Activated CD4-positive, alpha-beta memory T cell treated with anti-CD3 and anti-CD28 coated beads, Interleukin-2, amount 10 ng/mL, durations not matched to agents 7 days and 5 days (primary cell): ENCODE measurements at regions of chr14 and their contacts with region 1.

Region 1: DNA sequence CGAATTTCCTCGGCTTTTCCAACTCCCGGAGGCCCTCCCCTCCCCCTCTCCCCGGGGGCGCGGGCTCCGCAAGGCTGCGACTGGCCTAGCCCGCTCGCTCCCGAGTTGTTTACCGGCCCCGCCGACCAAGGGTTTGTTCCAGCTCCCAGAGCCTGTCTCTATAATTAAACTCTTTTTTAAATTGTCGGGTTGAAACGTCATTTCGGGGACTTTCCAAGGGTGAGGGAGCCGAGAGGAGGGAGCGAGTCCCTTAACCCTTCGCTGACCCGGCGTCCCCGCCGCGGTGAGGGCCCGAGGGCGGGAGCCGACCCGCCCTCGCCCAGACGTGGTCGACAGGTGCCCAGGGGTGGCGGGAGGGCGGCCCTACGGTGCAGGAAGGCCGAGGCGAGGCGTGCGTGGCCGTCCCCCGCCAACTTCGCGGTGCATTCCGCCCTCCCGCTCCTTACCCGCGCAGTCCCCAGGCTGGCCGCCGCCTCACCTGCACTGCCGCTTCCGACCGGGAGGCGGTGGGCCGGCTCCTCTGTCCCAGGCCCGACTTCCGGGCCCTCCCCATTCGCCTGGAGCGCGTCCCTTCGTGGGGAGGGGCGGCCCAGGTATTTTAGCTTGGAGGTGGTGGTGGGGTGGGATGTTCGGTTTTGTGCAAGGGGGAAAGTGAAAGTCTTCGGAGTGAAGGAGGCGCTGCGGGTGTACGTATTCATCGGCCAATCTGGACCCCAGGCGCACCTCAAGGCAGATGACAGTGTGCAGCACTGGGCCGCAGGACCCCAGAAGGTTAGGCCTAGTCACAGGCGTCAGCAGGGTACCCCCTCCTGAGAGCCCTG is 2.9 kb upstream of the ZFP36L1 start:
- DNase-seq: peak; percentile 84
- H3K4me3 Mint-ChIP-seq: peak overlapping the region; percentile 92
- H3K27ac Mint-ChIP-seq: peak overlapping the region; percentile 100
- H3K4me1 Mint-ChIP-seq: peaks cover 34% of the 10 kb centered on the region
- H3K27me3 Mint-ChIP-seq: no peaks in the 10 kb centered on the region

Region 2: GRCh38 chr14:68283378-68284123 is 512.3 kb before region 1 on chr14:
- CTCF ChIA-PET with region 1: interaction called, 4 read pairs
- POLR2A ChIA-PET with region 1: interaction called, 35 read pairs
- DNase-seq: peak; percentile 79
- H3K4me3 Mint-ChIP-seq: peak overlapping the region; percentile 47
- H3K27ac Mint-ChIP-seq: peak overlapping the region; percentile 96
- H3K4me1 Mint-ChIP-seq: peaks cover 48% of the 10 kb centered on the region
- H3K27me3 Mint-ChIP-seq: no peaks in the 10 kb centered on the region

Region 3: DNA sequence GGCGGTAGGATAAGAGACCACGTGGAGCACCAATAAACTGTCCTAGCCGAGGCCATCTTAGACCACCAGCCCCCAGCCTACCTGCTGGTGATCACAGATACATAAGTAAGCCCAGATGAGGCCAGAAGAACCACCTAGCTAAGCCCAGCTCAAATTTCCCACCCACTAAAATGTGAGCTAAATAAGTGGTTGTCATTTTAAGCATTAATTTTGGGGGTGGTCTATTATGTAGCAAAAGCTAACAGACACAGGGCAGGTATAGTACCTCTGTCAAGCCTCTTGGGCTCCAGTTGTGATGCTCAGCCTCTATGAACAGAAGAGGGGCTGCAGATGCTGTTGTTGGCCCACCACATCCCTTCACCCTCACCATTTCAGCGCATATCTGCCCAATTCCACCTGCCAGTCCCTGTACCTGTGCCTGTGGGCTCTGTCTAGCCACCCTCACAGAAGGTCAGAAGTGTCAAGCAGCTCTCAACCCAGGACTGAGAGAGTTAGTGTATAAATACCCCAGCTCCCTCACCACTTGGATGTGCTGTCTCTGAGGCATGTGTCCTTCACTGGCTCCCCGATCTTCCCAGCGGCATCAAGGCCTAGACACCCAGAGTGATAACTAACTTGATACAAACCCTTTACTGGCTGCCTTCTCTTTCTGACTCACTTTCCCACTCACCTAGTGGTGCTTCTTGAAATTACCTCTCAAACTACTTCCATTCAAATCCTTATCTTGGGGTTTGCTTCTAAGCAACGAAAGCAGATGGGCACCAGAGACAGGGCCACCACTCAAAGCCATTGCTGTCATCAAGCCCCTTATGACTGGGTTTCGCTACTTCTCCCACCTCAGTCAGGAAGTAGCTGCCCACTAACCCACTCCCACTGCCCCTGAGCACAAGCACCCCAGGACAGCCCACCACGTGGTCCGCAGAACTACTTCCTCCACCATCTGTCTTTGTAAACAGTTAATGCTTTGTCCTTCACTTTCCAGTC is 20.4 kb before region 1 on chr14:
- CTCF ChIA-PET with region 1: interaction called, 43 read pairs
- POLR2A ChIA-PET with region 1: interaction called, 313 read pairs
- DNase-seq: no peak
- H3K4me3 Mint-ChIP-seq: no peak overlapping the region
- H3K27ac Mint-ChIP-seq: no peak overlapping the region
- H3K4me1 Mint-ChIP-seq: peaks cover 60% of the 10 kb centered on the region
- H3K27me3 Mint-ChIP-seq: no peaks in the 10 kb centered on the region

Region 4: DNA sequence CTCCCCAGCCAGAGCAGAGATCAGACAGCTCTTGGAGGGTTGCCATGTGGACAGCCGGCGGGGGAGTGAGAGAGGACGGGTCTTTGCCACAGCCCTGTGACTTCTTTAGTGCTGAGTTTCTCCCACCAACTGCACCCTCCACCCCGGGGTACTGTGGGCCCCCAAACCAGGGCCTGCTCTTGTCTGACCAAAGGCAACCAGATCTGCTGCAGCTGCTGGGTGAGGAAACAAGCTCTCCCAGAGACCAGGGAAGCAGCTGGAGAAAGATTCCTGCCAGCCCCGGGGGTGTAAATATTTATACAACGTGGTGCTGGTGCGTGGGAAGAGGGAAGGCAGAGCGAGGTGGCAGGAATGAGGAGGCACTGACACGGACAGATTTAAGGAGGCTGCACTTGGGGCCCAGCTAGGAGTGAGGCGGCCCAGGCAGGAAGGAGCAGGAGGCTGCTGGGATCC is 11.4 kb after region 1 on chr14:
- CTCF ChIA-PET with region 1: interaction called, 5 read pairs
- POLR2A ChIA-PET with region 1: interaction called, 496 read pairs
- DNase-seq: no peak
- H3K4me3 Mint-ChIP-seq: no peak overlapping the region
- H3K27ac Mint-ChIP-seq: no peak overlapping the region
- H3K4me1 Mint-ChIP-seq: peaks cover 1% of the 10 kb centered on the region
- H3K27me3 Mint-ChIP-seq: no peaks in the 10 kb centered on the region

Region 5: GRCh38 chr14:69242311-69243224 is 446.8 kb after region 1 on chr14:
- CTCF ChIA-PET with region 1: no interaction called
- POLR2A ChIA-PET with region 1: no interaction called
- DNase-seq: peak; percentile 52
- H3K4me3 Mint-ChIP-seq: no peak overlapping the region
- H3K27ac Mint-ChIP-seq: no peak overlapping the region
- H3K4me1 Mint-ChIP-seq: peaks cover 2% of the 10 kb centered on the region
- H3K27me3 Mint-ChIP-seq: no peaks in the 10 kb centered on the region